ENCODE measurements at regions of chr3 and their contacts with region 1.

Region 1: DNA sequence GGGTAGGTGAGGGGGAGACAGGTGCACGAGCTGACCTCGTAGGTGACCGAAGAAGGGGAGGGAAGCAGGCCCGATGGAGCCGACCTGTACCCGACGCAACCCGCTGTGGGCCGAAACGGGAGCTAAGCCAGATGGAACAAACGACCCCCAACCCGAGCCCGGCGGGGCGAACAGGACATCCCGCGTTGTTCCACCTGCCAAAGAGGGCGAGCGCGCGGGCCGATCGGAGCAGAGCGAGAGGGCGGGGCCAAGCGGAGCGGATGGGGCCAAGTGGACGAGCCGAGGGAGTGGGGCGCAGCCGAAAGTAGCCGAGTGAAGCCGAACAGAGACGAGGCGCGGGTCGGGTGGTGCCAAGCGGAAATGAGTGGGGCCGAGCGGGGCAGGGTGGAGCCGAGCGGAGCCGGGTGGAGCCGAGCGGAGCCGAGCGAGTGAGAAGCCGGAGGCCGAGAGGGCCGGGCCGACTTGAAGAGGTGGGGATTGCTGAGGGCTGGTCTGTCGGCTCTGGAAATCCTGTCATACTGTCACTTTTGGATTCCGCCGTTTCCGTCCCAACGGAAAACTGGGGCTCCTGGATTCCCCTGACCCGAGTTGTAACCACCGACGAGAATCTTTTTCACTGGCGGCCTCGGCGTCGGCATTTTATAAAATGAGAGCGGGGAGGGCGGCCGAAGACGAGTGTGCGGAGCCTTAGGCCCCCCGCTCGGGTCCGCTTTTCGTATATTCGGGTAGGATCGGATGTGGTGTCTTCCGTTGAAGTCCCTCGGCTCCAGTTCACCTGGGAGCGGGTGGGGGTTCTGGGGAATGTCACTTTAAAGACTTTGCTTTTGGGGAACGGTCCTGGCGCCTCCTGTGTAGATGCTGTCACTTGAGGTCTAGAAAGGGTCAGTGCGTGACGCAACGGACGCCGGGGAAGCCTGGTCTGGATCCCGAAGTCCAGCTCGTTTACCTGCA is 15.6 kb upstream of the WNT7A start:
- DNase-seq: peak; percentile 93 to 96
- H3K4me3 ChIP-seq: peak overlapping the region; percentile 61 to 73
- H3K27ac ChIP-seq: peak overlapping the region; percentile 65
- H3K4me1 ChIP-seq: peaks cover 33% of the 10 kb centered on the region
- H3K27me3 ChIP-seq: no peaks in the 10 kb centered on the region
- CTCF ChIP-seq: no peak
- POLR2A ChIP-seq: peak in 1 of 2 donors; percentile 75

Region 2: DNA sequence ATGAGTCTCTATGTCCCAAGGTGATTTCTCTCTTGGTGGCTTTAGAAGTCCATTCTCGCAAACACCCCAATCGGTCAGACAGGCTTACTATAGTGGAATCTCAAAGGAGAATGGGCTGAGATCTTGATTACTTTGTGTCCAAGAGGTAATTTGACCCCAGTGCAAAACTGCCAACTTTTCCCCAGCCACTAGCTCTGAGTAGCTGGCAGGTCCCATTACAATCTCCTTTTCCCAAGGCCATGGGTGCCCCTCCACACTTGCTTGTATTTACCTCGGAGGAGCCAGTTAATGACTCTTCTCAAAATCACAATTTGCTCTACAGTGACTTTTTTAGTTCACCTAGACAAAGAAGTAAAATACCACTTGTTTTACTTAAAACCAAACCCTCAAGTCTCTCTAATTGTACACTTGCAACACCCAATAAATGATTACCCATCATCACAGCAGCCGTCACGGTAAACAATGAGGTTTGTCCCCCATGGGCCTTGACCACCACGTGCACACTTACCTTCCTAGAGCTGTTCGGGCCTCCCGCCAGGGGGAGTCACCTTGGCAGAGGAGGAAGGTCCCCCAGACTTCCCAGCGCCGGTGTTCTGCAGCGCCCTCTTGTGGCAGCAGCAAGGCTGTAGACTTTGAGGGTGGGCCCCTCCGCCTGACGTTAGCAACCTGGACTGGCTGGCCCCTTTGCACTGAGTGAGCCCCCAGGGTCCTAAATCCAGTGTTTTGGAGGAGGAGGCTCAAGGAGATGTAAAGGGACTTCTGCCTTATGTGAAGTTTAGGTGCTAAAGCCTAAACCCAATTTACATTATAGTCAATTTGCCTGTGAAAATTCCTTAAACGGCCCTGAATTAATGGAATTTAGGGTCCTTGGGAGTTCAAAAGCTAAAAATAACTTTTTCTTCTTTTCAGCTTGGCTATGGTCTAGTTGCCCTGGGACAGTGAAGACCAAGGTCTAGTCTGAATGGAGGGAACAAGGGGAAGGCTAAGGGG is 434.0 kb before region 1 on chr3:
- intact Hi-C with region 1: no loop called
- DNase-seq: no peak
- H3K4me3 ChIP-seq: no peak overlapping the region
- H3K27ac ChIP-seq: no peak overlapping the region
- H3K4me1 ChIP-seq: no peaks in the 10 kb centered on the region
- H3K27me3 ChIP-seq: no peaks in the 10 kb centered on the region
- CTCF ChIP-seq: peak in 1 of 3 experiments; percentile 11
- POLR2A ChIP-seq: no peak

Region 3: GRCh38 chr3:13657660-13658435 is 237.6 kb before region 1 on chr3:
- intact Hi-C with region 1: no loop called
- DNase-seq: no peak
- H3K4me3 ChIP-seq: no peak overlapping the region
- H3K27ac ChIP-seq: no peak overlapping the region
- H3K4me1 ChIP-seq: no peaks in the 10 kb centered on the region
- H3K27me3 ChIP-seq: no peaks in the 10 kb centered on the region
- CTCF ChIP-seq: peak; percentile 57 to 72 (median 59)
- POLR2A ChIP-seq: no peak

Region 4: DNA sequence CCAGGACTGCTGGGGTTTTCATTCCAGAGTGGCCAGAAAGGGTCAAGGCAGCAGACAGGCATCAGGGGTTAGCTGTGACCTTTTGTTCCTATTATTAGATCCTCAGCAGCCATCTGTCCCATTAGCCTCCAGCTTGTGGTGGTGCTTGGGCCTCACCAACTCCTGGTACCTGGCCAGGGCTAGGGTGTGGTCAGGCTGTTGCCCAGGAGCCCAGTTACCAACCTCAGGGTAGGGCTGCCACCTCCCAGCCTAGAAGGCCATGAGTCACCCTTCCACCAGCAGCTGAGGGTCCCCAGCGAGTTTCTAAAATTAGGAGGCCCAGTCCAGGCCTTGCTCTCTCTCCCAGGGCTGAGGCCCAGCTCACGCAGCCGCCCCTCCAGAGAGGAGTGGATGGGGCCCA is 241.6 kb after region 1 on chr3:
- intact Hi-C with region 1: loop called (anchors 10 kb)
- DNase-seq: no peak
- H3K4me3 ChIP-seq: no peak overlapping the region
- H3K27ac ChIP-seq: no peak overlapping the region
- H3K4me1 ChIP-seq: peaks cover 10% of the 10 kb centered on the region
- H3K27me3 ChIP-seq: no peaks in the 10 kb centered on the region
- CTCF ChIP-seq: no peak
- POLR2A ChIP-seq: no peak

Region 5: GRCh38 chr3:14461748-14462324 is 566.4 kb after region 1 on chr3:
- intact Hi-C with region 1: loop called (anchors 10 kb)
- DNase-seq: no peak
- H3K4me3 ChIP-seq: no peak overlapping the region
- H3K27ac ChIP-seq: no peak overlapping the region
- H3K4me1 ChIP-seq: peaks cover 21% of the 10 kb centered on the region
- H3K27me3 ChIP-seq: no peaks in the 10 kb centered on the region
- CTCF ChIP-seq: peak in 2 of 3 experiments; percentile 9 to 20
- POLR2A ChIP-seq: no peak

Measured in vagina (tissue), 2 donors.